ENCODE measurements at regions of chr3 and their contacts with region 1.

Region 1: GRCh38 chr3:177787279-177788041 is 590.2 kb upstream of the TBL1XR1 start:
- DNase-seq: no peak
- H3K4me3 Mint-ChIP-seq: no peak overlapping the region
- H3K27ac Mint-ChIP-seq: no peak overlapping the region
- H3K4me1 Mint-ChIP-seq: peaks cover 16% of the 10 kb centered on the region
- H3K27me3 Mint-ChIP-seq: no peaks in the 10 kb centered on the region

Region 2: DNA sequence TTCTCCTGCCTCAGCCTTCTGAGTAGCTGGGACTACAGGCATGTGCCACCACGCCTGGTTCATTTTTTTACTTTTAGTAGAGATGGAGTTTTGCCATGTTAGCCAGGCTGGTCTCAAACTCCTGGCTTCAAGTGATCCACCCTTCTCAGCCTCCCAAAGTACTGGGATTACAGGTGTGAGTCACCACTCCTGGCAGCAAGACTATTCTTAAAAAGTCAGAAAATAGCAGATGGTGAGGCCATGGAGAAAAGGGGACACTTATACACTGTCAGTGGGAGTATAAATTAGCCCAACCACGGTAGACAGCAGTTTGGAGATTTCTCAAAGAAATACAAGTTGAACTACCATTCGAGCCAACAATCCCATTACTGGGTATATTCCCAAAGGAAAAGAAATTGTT is 13.1 kb after region 1 on chr3:
- CTCF ChIA-PET with region 1: no interaction called
- POLR2A ChIA-PET with region 1: interaction called, 4 read pairs
- intact Hi-C with region 1: loop called (anchors 1 kb)
- DNase-seq: no peak
- H3K4me3 Mint-ChIP-seq: no peak overlapping the region
- H3K27ac Mint-ChIP-seq: no peak overlapping the region
- H3K4me1 Mint-ChIP-seq: peaks cover 14% of the 10 kb centered on the region
- H3K27me3 Mint-ChIP-seq: no peaks in the 10 kb centered on the region

Region 3: GRCh38 chr3:177843093-177843734 is 55.8 kb after region 1 on chr3:
- CTCF ChIA-PET with region 1: no interaction called
- POLR2A ChIA-PET with region 1: no interaction called
- intact Hi-C with region 1: loop called (anchors 2 kb)
- DNase-seq: no peak
- H3K4me3 Mint-ChIP-seq: no peak overlapping the region
- H3K27ac Mint-ChIP-seq: no peak overlapping the region
- H3K4me1 Mint-ChIP-seq: no peaks in the 10 kb centered on the region
- H3K27me3 Mint-ChIP-seq: no peaks in the 10 kb centered on the region

Region 4: DNA sequence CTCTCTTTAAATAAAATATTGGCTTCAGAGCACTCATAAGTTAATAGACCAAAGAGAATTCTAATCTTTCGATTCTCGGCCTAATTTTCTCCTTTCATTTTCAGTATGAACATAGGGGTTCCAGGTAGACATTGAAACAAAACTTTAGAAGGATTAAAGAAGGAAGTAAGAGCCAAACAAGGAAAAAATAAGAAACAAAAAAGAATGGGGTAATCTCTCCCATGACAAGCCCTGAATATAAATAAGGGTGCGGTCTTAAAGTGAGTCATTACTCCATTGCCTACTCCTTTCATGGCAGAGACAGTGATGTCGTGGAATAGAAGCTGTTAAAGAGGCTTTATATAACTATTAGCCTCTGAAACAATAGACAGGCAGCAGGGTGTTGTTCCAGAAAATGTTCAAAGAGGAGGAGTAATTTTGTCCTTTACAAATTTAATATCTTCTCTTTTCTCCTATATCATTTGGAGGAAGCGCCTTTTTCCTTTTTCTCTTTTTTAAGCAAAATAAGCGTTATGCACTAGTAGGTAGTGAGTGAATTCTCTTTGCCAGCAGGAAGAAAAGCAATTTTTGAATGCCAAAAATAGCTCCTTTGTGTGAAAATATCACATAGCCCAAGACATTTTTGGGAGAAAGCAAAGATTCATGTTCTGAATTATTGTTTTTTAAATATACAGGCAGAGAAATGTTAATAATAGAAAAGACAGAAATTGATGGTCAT is 140.9 kb after region 1 on chr3:
- CTCF ChIA-PET with region 1: no interaction called
- POLR2A ChIA-PET with region 1: no interaction called
- intact Hi-C with region 1: loop called (anchors 2 kb)
- DNase-seq: no peak
- H3K4me3 Mint-ChIP-seq: no peak overlapping the region
- H3K27ac Mint-ChIP-seq: no peak overlapping the region
- H3K4me1 Mint-ChIP-seq: peaks cover 24% of the 10 kb centered on the region
- H3K27me3 Mint-ChIP-seq: no peaks in the 10 kb centered on the region